Activated CD4-positive, alpha-beta memory T cell treated with anti-CD3 and anti-CD28 coated beads for 36 hours (primary cell): ENCODE measurements at regions of chrX and their contacts with region 1.

Region 1: DNA sequence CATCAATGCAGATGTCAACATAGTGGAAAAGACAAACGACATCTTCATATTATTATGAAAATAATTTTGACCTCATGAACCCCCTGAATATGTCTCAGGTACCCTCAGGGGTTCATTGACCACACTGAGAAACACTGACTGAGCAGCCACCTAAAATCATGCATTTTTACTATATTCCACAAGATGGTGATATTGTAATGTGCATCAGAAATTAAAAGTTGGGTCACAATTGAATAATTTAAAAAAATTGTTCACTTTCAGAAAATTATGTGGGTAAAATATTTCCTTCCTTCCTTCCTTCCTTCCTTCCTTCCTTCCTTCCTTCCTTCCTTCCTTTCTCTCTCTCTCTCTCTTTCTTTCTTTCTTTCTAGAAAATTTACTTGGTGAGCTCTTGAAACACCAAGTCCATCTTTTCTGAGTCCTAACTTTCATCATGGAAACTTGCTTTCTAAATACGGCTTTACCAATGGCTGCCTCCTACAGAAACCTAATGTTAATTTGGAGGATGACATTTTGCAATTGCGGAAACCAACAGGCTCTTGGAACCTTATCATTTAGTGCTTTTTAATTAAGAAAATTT is 103.6 kb downstream of the RTL3 start:
- DNase-seq: no peak
- H3K4me3 Mint-ChIP-seq: no peak overlapping the region
- H3K27ac Mint-ChIP-seq: no peak overlapping the region
- H3K4me1 Mint-ChIP-seq: peaks cover 5% of the 10 kb centered on the region
- H3K27me3 Mint-ChIP-seq: no peaks in the 10 kb centered on the region

Region 2: GRCh38 chrX:78708262-78708661 is 152.8 kb after region 1 on chrX:
- CTCF ChIA-PET with region 1: no interaction called
- POLR2A ChIA-PET with region 1: no interaction called
- intact Hi-C with region 1: loop called (anchors 10 kb)
- DNase-seq: no peak
- H3K4me3 Mint-ChIP-seq: no peak overlapping the region
- H3K27ac Mint-ChIP-seq: no peak overlapping the region
- H3K4me1 Mint-ChIP-seq: no peaks in the 10 kb centered on the region
- H3K27me3 Mint-ChIP-seq: no peaks in the 10 kb centered on the region

Region 3: GRCh38 chrX:78725287-78725686 is 169.8 kb after region 1 on chrX:
- CTCF ChIA-PET with region 1: no interaction called
- POLR2A ChIA-PET with region 1: no interaction called
- intact Hi-C with region 1: no loop called
- DNase-seq: no peak
- H3K4me3 Mint-ChIP-seq: no peak overlapping the region
- H3K27ac Mint-ChIP-seq: no peak overlapping the region
- H3K4me1 Mint-ChIP-seq: no peaks in the 10 kb centered on the region
- H3K27me3 Mint-ChIP-seq: no peaks in the 10 kb centered on the region

Region 4: GRCh38 chrX:78886550-78886949 is 331.1 kb after region 1 on chrX:
- CTCF ChIA-PET with region 1: interaction called, 3 read pairs
- POLR2A ChIA-PET with region 1: no interaction called
- intact Hi-C with region 1: loop called (anchors 5 kb)
- DNase-seq: no peak
- H3K4me3 Mint-ChIP-seq: no peak overlapping the region
- H3K27ac Mint-ChIP-seq: no peak overlapping the region
- H3K4me1 Mint-ChIP-seq: peaks cover 5% of the 10 kb centered on the region
- H3K27me3 Mint-ChIP-seq: no peaks in the 10 kb centered on the region

Region 5: DNA sequence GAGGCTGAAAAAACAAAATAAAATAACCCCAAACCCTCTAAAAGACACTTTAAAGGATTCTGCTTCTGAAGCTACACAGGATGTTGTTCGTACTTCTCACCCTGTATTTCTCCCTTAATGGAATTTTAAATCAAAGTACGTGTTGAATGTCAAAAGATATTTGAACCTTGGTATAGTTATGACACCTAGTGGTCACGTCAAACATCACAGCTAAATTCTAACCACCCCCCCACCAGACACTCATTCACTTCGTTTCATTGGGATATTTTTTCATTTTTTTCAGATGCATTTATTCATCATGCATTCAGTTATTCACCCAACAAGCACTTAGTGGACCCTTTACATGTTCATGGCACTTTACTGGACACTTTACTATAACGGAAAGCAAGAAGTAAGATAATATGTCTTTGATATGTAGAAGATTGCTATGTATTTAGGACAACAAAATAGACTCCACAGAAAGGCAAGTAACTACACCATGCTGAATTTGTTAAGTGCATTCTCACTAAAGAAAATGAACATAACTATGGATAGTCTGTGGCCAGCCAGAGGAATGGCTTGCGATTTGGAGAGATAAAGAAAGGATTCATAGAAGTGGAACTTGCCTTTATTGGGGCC is 526.5 kb after region 1 on chrX:
- CTCF ChIA-PET with region 1: interaction called, 7 read pairs
- POLR2A ChIA-PET with region 1: no interaction called
- intact Hi-C with region 1: loop called (anchors 1 kb)
- DNase-seq: peak; percentile 30
- H3K4me3 Mint-ChIP-seq: peak overlapping the region; percentile 69
- H3K27ac Mint-ChIP-seq: peak overlapping the region; percentile 79
- H3K4me1 Mint-ChIP-seq: peaks cover 41% of the 10 kb centered on the region
- H3K27me3 Mint-ChIP-seq: no peaks in the 10 kb centered on the region